ENCODE measurements at regions of chr17 and their contacts with region 1.

Region 1: GRCh38 chr17:78421484-78422266 is 43.2 kb downstream of the PGS1 start:
- DNase-seq: peak; percentile 85
- H3K4me3 ChIP-seq: no peak overlapping the region
- H3K27ac ChIP-seq: no peak overlapping the region
- H3K4me1 ChIP-seq: peaks cover 5% of the 10 kb centered on the region
- H3K27me3 ChIP-seq: no peaks in the 10 kb centered on the region
- CTCF ChIP-seq: peak; percentile 99

Region 2: GRCh38 chr17:78226749-78227399 is 194.8 kb before region 1 on chr17:
- intact Hi-C with region 1: no loop called
- DNase-seq: peak; percentile 38
- H3K4me3 ChIP-seq: no peak overlapping the region
- H3K27ac ChIP-seq: no peak overlapping the region
- H3K4me1 ChIP-seq: no peaks in the 10 kb centered on the region
- H3K27me3 ChIP-seq: peaks cover 14% of the 10 kb centered on the region
- CTCF ChIP-seq: no peak

Region 3: GRCh38 chr17:78272181-78272913 is 149.3 kb before region 1 on chr17:
- intact Hi-C with region 1: no loop called
- DNase-seq: peak; percentile 70
- H3K4me3 ChIP-seq: no peak overlapping the region
- H3K27ac ChIP-seq: no peak overlapping the region
- H3K4me1 ChIP-seq: no peaks in the 10 kb centered on the region
- H3K27me3 ChIP-seq: no peaks in the 10 kb centered on the region
- CTCF ChIP-seq: no peak

Region 4: DNA sequence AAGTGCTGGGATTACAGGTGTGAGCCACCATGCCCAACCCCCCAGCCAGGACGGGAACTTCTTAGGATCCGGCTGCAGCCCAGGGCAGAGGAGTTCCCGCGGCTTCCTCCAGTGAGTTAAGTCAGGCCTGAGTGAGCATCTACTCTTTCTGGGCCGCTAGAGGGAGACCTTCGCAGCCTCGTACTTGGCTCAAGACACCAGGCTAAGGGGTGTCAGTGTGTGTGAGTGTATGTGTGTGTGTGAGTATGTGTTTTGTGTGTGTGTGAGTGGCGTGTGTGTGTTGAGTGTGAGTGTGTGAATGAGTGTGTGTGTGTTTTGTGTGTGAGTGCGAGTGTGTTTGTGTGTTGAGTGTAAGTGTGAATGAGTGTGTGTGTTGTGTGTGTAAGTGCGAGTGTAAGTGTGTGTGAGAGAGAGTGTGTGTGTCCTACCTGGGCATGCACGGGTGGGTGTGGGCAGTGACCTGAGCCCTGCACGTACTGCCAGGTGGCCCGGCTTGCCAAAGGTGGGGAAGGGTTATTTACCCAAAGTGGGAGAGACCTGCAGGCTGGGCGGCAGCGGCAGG is 131.8 kb before region 1 on chr17:
- intact Hi-C with region 1: loop called (anchors 5 kb)
- DNase-seq: peak; percentile 79
- H3K4me3 ChIP-seq: no peak overlapping the region
- H3K27ac ChIP-seq: no peak overlapping the region
- H3K4me1 ChIP-seq: no peaks in the 10 kb centered on the region
- H3K27me3 ChIP-seq: no peaks in the 10 kb centered on the region
- CTCF ChIP-seq: peak; percentile 61

Region 5: GRCh38 chr17:78360371-78361224 is 61.1 kb before region 1 on chr17:
- intact Hi-C with region 1: loop called (anchors 2 kb)
- DNase-seq: peak; percentile 99
- H3K4me3 ChIP-seq: peak overlapping the region; percentile 55
- H3K27ac ChIP-seq: peak overlapping the region; percentile 96
- H3K4me1 ChIP-seq: peaks cover 7% of the 10 kb centered on the region
- H3K27me3 ChIP-seq: no peaks in the 10 kb centered on the region
- CTCF ChIP-seq: peak; percentile 92

Region 6: DNA sequence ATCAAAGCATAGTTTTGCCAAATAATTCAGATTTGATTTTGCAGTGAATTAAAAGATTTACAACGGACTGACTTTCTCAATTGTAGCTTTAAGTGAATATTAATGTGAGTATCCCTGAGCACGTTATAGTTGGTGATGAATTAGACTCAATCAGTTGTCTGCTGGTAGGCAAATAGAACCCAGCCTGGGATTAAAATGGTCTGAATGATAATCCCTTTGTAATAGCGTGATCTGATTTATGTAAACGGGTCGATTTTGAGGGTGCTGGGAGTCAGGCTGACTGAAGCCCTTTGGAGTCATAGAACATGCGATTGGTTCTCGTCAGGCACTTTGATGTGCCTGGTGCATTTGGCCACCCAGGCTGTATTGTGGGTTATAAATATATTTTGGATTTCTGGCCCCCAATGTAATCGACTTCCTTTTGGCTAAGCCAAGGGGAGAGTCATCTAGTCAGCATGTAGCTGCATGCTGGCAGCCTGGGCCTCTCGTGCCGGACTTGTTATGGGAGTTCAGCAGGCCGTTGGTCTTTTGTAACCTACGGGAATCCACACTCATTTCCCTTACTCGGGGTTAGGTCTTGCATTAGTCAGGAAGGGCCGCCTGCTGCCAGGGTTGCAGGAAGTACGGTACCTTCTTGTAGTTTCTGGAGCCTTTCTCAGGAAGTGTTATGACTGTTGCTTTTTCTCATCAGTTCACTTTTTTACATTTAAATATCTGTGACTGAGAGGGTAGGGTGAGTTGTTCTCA is 37.8 kb before region 1 on chr17:
- intact Hi-C with region 1: no loop called
- DNase-seq: peak; percentile 45
- H3K4me3 ChIP-seq: no peak overlapping the region
- H3K27ac ChIP-seq: peak overlapping the region; percentile 78
- H3K4me1 ChIP-seq: peaks cover 31% of the 10 kb centered on the region
- H3K27me3 ChIP-seq: no peaks in the 10 kb centered on the region
- CTCF ChIP-seq: no peak

Region 7: DNA sequence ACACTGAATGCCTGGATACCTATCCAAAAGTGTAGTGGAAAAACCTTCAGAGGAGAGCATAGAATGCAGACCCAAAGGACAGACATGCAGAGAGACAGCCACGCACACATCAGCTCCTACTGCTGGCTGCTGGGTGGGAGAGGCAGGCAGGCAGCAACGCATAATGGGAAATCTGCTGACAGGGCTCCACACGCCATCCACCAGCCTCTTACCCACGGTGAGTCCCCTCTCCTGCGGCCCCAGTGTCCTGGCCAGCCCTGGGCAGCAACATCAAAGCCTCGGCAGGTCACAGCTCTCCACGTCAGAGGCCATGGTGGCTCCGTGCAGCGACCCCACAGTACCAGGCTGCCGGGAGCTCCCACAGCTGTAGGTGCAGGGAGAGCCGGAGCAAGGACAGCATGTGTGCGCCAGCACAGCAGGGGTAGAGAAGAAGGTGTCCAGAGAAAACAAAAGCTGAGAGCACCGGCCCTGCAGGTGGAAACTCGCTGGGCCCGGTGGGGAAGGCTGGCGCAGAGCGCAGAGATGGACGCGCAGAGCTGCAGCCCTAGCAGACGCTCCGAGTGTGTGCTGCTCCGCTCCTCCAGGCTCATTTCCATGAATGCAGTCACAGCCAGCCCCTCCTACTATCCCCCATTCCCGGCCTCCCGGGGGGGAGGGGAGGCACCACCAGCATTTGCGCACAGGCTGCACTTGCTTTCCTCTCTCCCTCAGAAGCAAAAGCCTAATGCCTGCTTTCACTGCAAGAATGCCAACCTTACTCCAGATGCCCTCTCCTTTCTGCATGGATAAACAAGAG is 301.5 kb after region 1 on chr17:
- intact Hi-C with region 1: no loop called
- DNase-seq: no peak
- H3K4me3 ChIP-seq: no peak overlapping the region
- H3K27ac ChIP-seq: peak overlapping the region; percentile 25
- H3K4me1 ChIP-seq: peaks cover 39% of the 10 kb centered on the region
- H3K27me3 ChIP-seq: no peaks in the 10 kb centered on the region
- CTCF ChIP-seq: no peak